ENCODE measurements at regions of chr14 and their contacts with region 1.

Region 1: GRCh38 chr14:105490572-105491366 is at the start of gene TEDC1:
- DNase-seq: peak; percentile 95 to 100 (median 99)
- ATAC-seq: peak; percentile 64 to 73
- H3K4me3 Mint-ChIP-seq: peak within 1 kb of the TSS; percentile 81 to 96 (median 88)
- H3K27ac Mint-ChIP-seq: peak within 1 kb of the TSS; percentile 87 to 100 (median 99)
- H3K4me1 Mint-ChIP-seq: peaks cover 10 to 36% (median 28%) of the 10 kb centered on the region in 4 donors
- H3K27me3 Mint-ChIP-seq: peaks cover 0 to 4% (median 0%) of the 10 kb centered on the region in 5 donors
- polyA plus RNA-seq, gene TEDC1: 7.2 to 10.1 (median 7.6) TPM

Region 2: DNA sequence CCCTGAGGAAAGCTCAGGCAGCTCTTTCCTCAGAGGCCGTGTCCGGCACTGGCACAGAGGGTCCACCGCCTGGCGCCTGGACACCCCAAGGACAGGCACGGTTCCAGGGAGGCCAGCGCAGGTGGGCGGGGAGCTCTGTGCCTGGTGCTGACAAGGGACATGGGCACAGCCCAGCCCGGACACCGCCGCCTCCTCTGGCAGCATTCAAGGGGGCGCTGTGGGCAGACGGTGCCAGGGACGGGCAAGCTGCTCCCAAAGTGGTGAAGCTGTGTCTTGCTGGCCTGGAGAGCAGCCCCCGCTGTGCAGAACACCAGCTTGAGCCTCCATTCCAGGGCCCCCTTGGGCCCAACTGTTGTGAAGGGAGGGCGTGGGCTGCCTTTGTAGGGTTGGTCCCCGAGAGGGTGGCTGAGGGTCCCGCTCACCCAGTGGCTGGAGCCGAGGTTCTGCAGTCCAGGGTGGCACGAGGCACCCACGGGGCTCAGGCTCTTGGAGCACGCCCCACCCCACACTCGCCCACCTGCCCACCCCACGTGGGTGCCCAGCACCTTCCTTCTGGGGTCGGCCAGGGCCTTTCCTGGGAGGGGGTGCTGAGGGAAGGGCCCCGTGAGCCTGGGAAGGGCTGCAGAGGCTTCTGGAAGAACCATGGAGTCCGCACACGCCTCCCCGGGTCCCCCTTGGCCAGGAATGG is 121.7 kb before region 1 on chr14:
- POLR2A ChIA-PET with region 1: interaction called, 38 read pairs
- DNase-seq: no peak
- ATAC-seq: no peak
- H3K4me3 Mint-ChIP-seq: no peak overlapping the region
- H3K27ac Mint-ChIP-seq: no peak overlapping the region
- H3K4me1 Mint-ChIP-seq: peaks cover 5 to 11% (median 8%) of the 10 kb centered on the region in 4 donors
- H3K27me3 Mint-ChIP-seq: no peaks in the 10 kb centered on the region

Region 3: DNA sequence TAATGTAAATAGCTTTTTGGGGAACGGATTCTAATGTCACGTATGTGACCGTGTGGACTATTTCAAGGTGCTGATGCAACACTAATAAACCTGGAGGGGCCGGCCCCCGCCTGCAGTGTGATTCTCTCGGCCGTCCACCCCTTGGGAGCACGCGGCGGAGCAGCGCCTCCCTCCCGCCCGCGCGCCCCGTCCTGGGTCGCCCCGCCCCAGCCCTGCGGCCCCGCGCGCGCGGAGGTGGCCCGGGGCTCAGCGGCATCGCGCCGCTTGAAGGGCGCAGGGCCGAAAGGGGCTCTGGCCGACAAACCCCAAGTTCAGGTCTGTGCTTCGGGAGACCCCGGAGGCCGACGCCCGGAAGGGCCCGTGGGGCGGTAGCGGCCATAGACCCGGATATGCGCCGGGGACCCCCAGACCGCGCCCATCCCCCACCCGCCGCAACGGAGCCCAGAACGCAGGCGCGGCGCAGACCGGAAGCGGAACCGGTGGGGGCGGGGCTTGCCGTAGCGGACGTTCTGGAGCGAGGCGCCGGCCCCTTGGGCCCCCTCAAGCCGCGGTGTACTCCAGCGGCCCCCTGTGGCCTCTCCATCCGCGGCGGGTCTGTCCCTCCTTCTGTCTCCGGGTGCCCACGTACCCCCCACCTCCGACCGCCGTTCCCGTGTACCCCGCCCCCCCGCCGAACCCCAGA is 92.6 kb before region 1 on chr14 and contains the start of gene TEX22:
- POLR2A ChIA-PET with region 1: interaction called, 30 read pairs
- DNase-seq: peak; percentile 75 to 94 (median 88)
- ATAC-seq: peak; percentile 85 to 89
- H3K4me3 Mint-ChIP-seq: peak within 1 kb of the TSS; percentile 75 to 89 (median 82)
- H3K27ac Mint-ChIP-seq: peak within 1 kb of the TSS in 9 of 10 donors; percentile 83 to 94 (median 88)
- H3K4me1 Mint-ChIP-seq: peaks cover 9 to 32% (median 26%) of the 10 kb centered on the region in 4 donors
- H3K27me3 Mint-ChIP-seq: no peaks in the 10 kb centered on the region
- polyA plus RNA-seq, gene TEX22: 0.09 to 0.15 TPM in 2 of 3 donors, not detected in the other

Region 4: GRCh38 chr14:105473677-105474482 is 16.9 kb before region 1 on chr14:
- POLR2A ChIA-PET with region 1: interaction called, 165 read pairs
- DNase-seq: peak in 9 of 10 donors; percentile 51 to 86 (median 68)
- ATAC-seq: peak; percentile 60 to 62
- H3K4me3 Mint-ChIP-seq: peak overlapping the region; percentile 57 to 84 (median 78)
- H3K27ac Mint-ChIP-seq: peak overlapping the region in 3 of 10 donors; percentile 48 to 80 (median 59)
- H3K4me1 Mint-ChIP-seq: peaks cover 3 to 25% (median 20%) of the 10 kb centered on the region in 4 donors
- H3K27me3 Mint-ChIP-seq: peaks cover 0 to 8% (median 0%) of the 10 kb centered on the region in 5 donors

Region 5: GRCh38 chr14:105527661-105528581 is 37.2 kb after region 1 on chr14:
- POLR2A ChIA-PET with region 1: interaction called, 31 read pairs
- DNase-seq: peak; percentile 61 to 85 (median 80)
- ATAC-seq: peak; percentile 70 to 76
- H3K4me3 Mint-ChIP-seq: peak overlapping the region; percentile 59 to 88 (median 76)
- H3K27ac Mint-ChIP-seq: peak overlapping the region in 4 of 10 donors; percentile 8 to 59 (median 35)
- H3K4me1 Mint-ChIP-seq: peaks cover 5 to 35% (median 28%) of the 10 kb centered on the region in 4 donors
- H3K27me3 Mint-ChIP-seq: peaks cover 0 to 11% (median 7%) of the 10 kb centered on the region in 5 donors

Measured in naive thymus-derived CD8-positive, alpha-beta T cell (primary cell).